SK-N-SH (cell line): ENCODE measurements at regions of chr3 and their contacts with region 1.

Region 1: GRCh38 chr3:141011232-141011996 is 39.7 kb upstream of the SPSB4 start:
- DNase-seq: peak; percentile 79
- H3K4me3 ChIP-seq: no peak overlapping the region
- H3K27ac ChIP-seq: no peak overlapping the region
- H3K4me1 ChIP-seq: no peaks in the 10 kb centered on the region; a peak in 1 of 4 replicates
- H3K27me3 ChIP-seq: no peaks in the 10 kb centered on the region
- CTCF ChIP-seq: peak; percentile 76
- EP300 ChIP-seq: no peak
- RAD21 ChIP-seq: peak; percentile 85

Region 2: GRCh38 chr3:141039589-141039988 is 28.2 kb after region 1 on chr3:
- CTCF ChIA-PET with region 1: interaction called, 11 read pairs
- POLR2A ChIA-PET with region 1: no interaction called
- DNase-seq: no peak
- H3K4me3 ChIP-seq: no peak overlapping the region
- H3K27ac ChIP-seq: no peak overlapping the region
- H3K4me1 ChIP-seq: no peaks in the 10 kb centered on the region
- H3K27me3 ChIP-seq: no peaks in the 10 kb centered on the region
- CTCF ChIP-seq: no peak
- EP300 ChIP-seq: no peak
- RAD21 ChIP-seq: no peak

Region 3: GRCh38 chr3:141094790-141095545 is 83.6 kb after region 1 on chr3:
- CTCF ChIA-PET with region 1: interaction called, 11 read pairs
- POLR2A ChIA-PET with region 1: no interaction called
- DNase-seq: no peak
- H3K4me3 ChIP-seq: no peak overlapping the region
- H3K27ac ChIP-seq: no peak overlapping the region
- H3K4me1 ChIP-seq: peaks cover 0 to 49% of the 10 kb centered on the region in 2 experiments; a peak in 3 of 4 replicates
- H3K27me3 ChIP-seq: no peaks in the 10 kb centered on the region
- CTCF ChIP-seq: no peak
- EP300 ChIP-seq: no peak
- RAD21 ChIP-seq: no peak

Region 4: GRCh38 chr3:141105828-141106628 is 94.6 kb after region 1 on chr3:
- CTCF ChIA-PET with region 1: interaction called, 78 read pairs
- POLR2A ChIA-PET with region 1: no interaction called
- DNase-seq: peak; percentile 76
- H3K4me3 ChIP-seq: no peak overlapping the region; a peak in 1 of 4 replicates
- H3K27ac ChIP-seq: no peak overlapping the region
- H3K4me1 ChIP-seq: peaks cover 0 to 21% of the 10 kb centered on the region in 2 experiments; a peak in 1 of 4 replicates
- H3K27me3 ChIP-seq: no peaks in the 10 kb centered on the region
- CTCF ChIP-seq: peak; percentile 81
- EP300 ChIP-seq: no peak
- RAD21 ChIP-seq: peak; percentile 87

Region 5: DNA sequence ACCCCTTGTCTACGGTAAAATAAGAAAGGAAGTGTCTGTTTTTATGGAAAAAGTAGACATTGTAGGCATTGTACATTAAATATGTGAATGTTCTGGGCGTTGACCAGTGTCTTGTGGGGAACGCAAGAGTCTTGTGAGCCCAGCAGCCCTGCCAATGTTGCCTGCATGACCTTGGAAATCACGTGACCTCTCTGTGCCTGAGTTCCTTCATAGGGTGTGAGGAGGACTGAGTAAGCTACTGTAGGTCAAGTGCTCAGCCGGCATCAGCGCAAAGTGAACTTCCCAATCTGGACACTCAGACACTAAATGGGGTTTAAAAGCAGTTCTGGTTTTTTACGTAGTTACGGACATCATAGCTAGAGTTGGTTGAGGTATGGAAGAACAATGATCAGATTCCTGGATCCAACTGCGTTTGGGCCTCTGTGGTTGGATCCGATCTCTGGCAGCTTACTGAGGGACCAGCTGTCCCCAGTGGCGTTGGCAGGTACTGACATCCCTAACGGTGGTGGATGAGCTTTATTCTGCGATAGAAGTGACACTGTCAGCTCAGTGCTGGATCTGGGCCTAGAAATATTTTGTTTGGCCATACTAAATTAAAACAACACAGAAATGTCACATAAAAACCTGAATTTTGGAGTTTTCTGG is 103.5 kb after region 1 on chr3:
- CTCF ChIA-PET with region 1: interaction called, 28 read pairs
- POLR2A ChIA-PET with region 1: no interaction called
- DNase-seq: peak; percentile 50
- H3K4me3 ChIP-seq: no peak overlapping the region
- H3K27ac ChIP-seq: no peak overlapping the region
- H3K4me1 ChIP-seq: no peaks in the 10 kb centered on the region
- H3K27me3 ChIP-seq: no peaks in the 10 kb centered on the region
- CTCF ChIP-seq: peak; percentile 28; the same call in 1 of the 2 replicates
- EP300 ChIP-seq: no peak
- RAD21 ChIP-seq: peak; percentile 13; the same call in 1 of the 2 replicates

Region 6: GRCh38 chr3:141174674-141175073 is 163.3 kb after region 1 on chr3:
- CTCF ChIA-PET with region 1: interaction called, 12 read pairs
- POLR2A ChIA-PET with region 1: no interaction called
- DNase-seq: no peak
- H3K4me3 ChIP-seq: no peak overlapping the region
- H3K27ac ChIP-seq: no peak overlapping the region
- H3K4me1 ChIP-seq: no peaks in the 10 kb centered on the region
- H3K27me3 ChIP-seq: no peaks in the 10 kb centered on the region
- CTCF ChIP-seq: no peak
- EP300 ChIP-seq: no peak
- RAD21 ChIP-seq: no peak

Region 7: DNA sequence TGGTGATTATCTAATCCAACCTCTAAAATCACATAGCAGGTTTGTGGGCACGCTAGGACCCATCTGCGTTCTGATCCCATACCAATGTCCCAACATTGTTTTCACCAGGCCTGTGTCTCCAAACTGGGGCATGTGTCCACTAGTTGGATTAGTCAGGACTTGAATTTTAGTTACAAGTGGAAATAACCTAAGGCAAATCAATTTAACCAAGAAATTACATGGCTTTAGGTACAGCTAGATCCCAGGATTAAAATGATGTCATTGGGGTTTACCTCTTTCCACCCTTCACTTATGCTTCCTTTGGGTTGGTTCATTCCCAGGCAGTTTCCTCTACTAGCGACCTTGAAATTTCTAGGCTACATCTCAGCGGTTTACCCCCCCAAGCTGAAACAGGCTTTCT is 173.0 kb after region 1 on chr3:
- CTCF ChIA-PET with region 1: interaction called, 30 read pairs
- POLR2A ChIA-PET with region 1: no interaction called
- DNase-seq: no peak
- H3K4me3 ChIP-seq: no peak overlapping the region
- H3K27ac ChIP-seq: no peak overlapping the region
- H3K4me1 ChIP-seq: no peaks in the 10 kb centered on the region
- H3K27me3 ChIP-seq: no peaks in the 10 kb centered on the region
- CTCF ChIP-seq: no peak
- EP300 ChIP-seq: no peak
- RAD21 ChIP-seq: no peak